ENCODE measurements at regions of chr1 and their contacts with region 1.

Region 1: DNA sequence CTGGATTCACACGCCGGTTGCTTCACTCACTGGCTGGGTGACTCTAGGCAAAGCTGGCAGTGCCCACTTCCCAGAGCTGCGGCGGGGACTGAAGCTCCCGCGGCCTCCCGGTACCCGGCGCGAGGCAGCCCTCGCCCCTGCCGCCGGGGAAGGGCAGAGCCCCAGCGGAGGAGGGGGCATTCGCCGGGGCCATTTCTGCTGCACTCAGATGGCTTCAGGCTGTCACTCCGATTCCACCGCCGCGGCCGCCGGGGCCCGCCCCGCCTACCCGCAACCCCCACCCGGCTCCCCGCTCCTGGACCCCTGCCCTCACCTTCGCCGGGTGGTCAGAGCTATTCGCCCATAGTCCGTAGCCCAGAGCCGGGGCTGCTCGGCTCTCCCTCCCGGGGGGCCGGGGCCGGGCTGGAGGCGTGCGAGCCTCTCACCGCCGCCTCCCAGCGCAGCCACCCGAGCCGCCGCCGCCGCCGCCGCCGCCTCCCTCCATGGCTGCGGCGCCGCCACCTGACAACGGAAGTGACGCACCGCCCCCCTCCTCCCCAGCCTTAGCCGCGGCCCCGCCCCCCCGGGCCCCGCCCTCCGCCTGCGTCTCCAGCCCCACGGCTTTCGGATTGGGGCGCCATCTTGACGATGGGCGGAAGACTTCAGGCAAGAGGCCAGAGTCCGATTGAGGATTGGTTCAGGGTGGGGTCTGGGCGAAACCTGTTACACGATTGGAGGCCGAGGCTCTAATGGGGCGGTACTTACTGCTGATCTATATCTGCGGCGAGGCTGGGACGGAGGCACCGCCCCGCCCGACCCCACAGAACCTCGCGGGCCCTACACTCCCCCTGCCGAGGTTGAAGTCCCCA is at the start of gene STK40:
- DNase-seq: peak; percentile 97 to 98
- H3K4me3 ChIP-seq: peak within 1 kb of the TSS; percentile 98
- H3K27ac ChIP-seq: peak within 1 kb of the TSS; percentile 99
- H3K4me1 ChIP-seq: peaks cover 33% of the 10 kb centered on the region
- H3K27me3 ChIP-seq: no peaks in the 10 kb centered on the region
- CTCF ChIP-seq: no peak
- total RNA-seq, gene STK40: 42.9 and 59.2 TPM in 2 replicates

Region 2: DNA sequence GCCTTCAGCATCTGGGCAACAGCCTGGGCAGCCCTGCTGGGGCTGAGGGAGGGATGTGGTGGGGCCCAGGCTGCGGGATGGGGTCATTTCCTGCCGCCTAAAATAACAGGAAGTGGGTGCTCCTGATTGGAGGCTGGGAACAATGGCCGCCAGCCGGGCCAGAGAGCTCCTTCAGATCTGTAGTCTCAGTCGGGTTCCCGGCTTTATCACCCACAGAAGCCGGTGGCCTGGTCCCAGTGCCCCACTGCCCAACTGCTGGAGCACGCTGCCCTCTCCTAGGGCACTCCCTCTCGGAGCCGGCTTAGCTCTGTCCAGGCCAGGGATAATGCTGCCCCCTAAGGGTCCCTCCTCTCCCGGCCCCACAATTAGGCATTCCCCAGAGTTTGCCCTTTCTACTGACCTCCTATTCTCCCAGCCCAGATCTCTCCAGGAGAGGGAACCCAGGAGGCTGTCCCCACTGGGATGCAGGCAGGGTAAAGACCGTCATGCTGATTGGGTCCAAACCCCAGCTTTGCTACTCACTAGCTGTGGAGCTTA is 224.6 kb before region 1 on chr1:
- CTCF ChIA-PET with region 1: interaction called, 13 read pairs
- POLR2A ChIA-PET with region 1: no interaction called
- intact Hi-C with region 1: no loop called
- DNase-seq: peak in 1 of 2 experiments; percentile 64
- H3K4me3 ChIP-seq: no peak overlapping the region
- H3K27ac ChIP-seq: peak overlapping the region; percentile 55
- H3K4me1 ChIP-seq: peaks cover 51% of the 10 kb centered on the region
- H3K27me3 ChIP-seq: no peaks in the 10 kb centered on the region
- CTCF ChIP-seq: no peak

Region 3: DNA sequence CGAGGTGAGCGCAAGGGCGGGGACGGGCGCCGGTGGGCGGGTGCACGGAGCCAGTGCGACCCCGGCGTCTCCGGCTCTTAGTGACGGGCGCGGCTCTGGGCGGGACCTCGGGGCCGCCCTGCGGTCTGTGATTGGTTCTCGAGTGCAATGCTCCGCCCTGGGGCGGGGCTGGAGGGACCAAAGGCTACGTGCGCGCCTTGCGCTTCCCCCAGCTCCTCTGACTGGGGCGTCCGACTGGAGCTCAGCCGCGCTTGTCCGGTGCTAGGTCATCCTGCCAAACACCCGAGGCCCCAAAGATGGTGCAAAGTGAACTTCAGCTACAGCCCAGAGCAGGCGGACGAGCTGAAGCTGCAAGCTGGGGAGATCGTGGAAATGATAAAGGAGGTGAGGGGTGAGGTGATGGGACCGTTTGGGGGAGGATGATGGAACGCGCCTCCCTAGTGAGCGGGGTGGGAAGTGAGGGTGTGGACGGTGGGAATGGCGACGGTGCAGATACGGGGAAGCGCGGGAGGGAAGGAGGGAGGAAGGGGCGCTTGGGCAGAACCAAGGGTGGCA is 78.7 kb before region 1 on chr1:
- CTCF ChIA-PET with region 1: interaction called, 3 read pairs
- POLR2A ChIA-PET with region 1: interaction called, 11 read pairs
- intact Hi-C with region 1: loop called (anchors 10 kb)
- DNase-seq: peak; percentile 79 to 95
- H3K4me3 ChIP-seq: peak overlapping the region; percentile 68
- H3K27ac ChIP-seq: peak overlapping the region; percentile 57
- H3K4me1 ChIP-seq: peaks cover 11% of the 10 kb centered on the region
- H3K27me3 ChIP-seq: no peaks in the 10 kb centered on the region
- CTCF ChIP-seq: no peak

Region 4: GRCh38 chr1:36323597-36324352 is 61.9 kb before region 1 on chr1 and contains the start of gene EVA1B:
- CTCF ChIA-PET with region 1: no interaction called
- POLR2A ChIA-PET with region 1: no interaction called
- intact Hi-C with region 1: no loop called
- DNase-seq: peak in 1 of 2 experiments; percentile 72
- H3K4me3 ChIP-seq: peak within 1 kb of the TSS; percentile 52; the same call in 1 of the 2 replicates
- H3K27ac ChIP-seq: no peak within 1 kb of the TSS
- H3K4me1 ChIP-seq: no peaks in the 10 kb centered on the region; the same call in 1 of the 2 replicates
- H3K27me3 ChIP-seq: no peaks in the 10 kb centered on the region
- CTCF ChIP-seq: no peak
- total RNA-seq, gene EVA1B: 12.4 and 20.5 TPM in 2 replicates

Region 5: GRCh38 chr1:36397378-36398230 is 12.0 kb after region 1 on chr1 and contains the start of gene LSM10:
- CTCF ChIA-PET with region 1: interaction called, 4 read pairs
- POLR2A ChIA-PET with region 1: interaction called, 13 read pairs
- intact Hi-C with region 1: loop called (anchors 1 kb)
- DNase-seq: peak; percentile 87 to 92
- H3K4me3 ChIP-seq: peak within 1 kb of the TSS; percentile 85
- H3K27ac ChIP-seq: peak within 1 kb of the TSS; percentile 28; the same call in 1 of the 2 replicates
- H3K4me1 ChIP-seq: peaks cover 10% of the 10 kb centered on the region
- H3K27me3 ChIP-seq: no peaks in the 10 kb centered on the region
- CTCF ChIP-seq: no peak
- total RNA-seq, gene LSM10: 33.4 and 39.7 TPM in 2 replicates

Region 6: GRCh38 chr1:36420836-36421664 is 35.4 kb after region 1 on chr1:
- CTCF ChIA-PET with region 1: interaction called, 4 read pairs
- POLR2A ChIA-PET with region 1: interaction called, 7 read pairs
- intact Hi-C with region 1: loop called (anchors 1 kb)
- DNase-seq: peak; percentile 72 to 93
- H3K4me3 ChIP-seq: no peak overlapping the region
- H3K27ac ChIP-seq: no peak overlapping the region
- H3K4me1 ChIP-seq: peaks cover 23% of the 10 kb centered on the region
- H3K27me3 ChIP-seq: no peaks in the 10 kb centered on the region
- CTCF ChIP-seq: peak; percentile 91

Region 7: GRCh38 chr1:37479255-37480124 is 1093.9 kb after region 1 on chr1:
- CTCF ChIA-PET with region 1: no interaction called
- POLR2A ChIA-PET with region 1: interaction called, 3 read pairs
- intact Hi-C with region 1: loop called (anchors 5 kb)
- DNase-seq: peak; percentile 93 to 98
- H3K4me3 ChIP-seq: peak overlapping the region; percentile 94
- H3K27ac ChIP-seq: peak overlapping the region; percentile 96
- H3K4me1 ChIP-seq: peaks cover 56% of the 10 kb centered on the region
- H3K27me3 ChIP-seq: no peaks in the 10 kb centered on the region
- CTCF ChIP-seq: no peak